Transverse colon (tissue), 4 donors: ENCODE measurements at regions of chrX and their contacts with region 1.

Region 1: DNA sequence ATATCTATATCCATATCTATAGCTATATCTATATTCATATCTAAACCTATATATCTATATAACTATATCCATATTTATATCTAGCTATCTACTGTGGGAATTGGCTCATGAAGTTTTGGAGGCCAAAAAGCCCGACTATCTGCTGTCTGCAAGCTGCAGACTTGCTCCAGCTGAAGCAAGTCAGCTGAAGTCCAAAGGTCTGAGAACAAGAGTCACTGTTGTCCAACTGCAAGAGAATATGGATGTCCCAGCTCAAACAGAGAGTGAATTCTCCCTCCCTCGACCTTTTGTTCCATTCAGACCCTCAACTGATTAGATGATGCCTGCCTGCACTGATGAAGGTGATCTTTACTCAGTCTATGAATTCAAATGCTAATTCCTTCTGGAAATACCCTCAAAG is 63.3 kb upstream of the VCX start:
- DNase-seq: no peak
- H3K4me3 ChIP-seq: no peak overlapping the region
- H3K27ac ChIP-seq: no peak overlapping the region
- H3K4me1 ChIP-seq: no peaks in the 10 kb centered on the region
- H3K27me3 ChIP-seq: no peaks in the 10 kb centered on the region
- CTCF ChIP-seq: no peak
- EP300 ChIP-seq: no peak
- POLR2A ChIP-seq: no peak

Region 2: DNA sequence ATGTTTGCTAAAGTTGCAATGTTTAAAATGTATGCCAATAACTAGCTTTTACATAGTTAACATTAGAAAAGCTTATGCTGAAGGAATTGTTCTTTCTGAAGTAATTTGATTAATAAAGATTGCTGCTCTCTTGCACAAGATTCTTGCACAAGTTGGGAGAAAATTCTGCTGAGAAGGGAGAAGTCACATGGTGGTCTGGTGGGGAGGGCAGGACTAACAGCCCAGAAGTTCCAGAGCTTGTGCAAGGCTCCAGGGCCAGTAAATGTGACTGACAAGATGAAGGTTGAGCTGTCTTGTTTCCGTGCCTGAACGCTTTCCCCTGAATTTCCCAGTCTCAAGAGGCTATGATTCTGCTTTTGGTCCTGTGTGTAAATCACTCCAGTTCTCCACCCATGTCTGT is 49.6 kb before region 1 on chrX:
- in situ Hi-C with region 1: no loop called
- intact Hi-C with region 1: loop called (anchors 2 kb)
- DNase-seq: no peak
- H3K4me3 ChIP-seq: no peak overlapping the region
- H3K27ac ChIP-seq: no peak overlapping the region
- H3K4me1 ChIP-seq: no peaks in the 10 kb centered on the region
- H3K27me3 ChIP-seq: no peaks in the 10 kb centered on the region
- CTCF ChIP-seq: no peak
- EP300 ChIP-seq: no peak
- POLR2A ChIP-seq: no peak